Activated CD8-positive, alpha-beta T cell treated with anti-CD3 and anti-CD28 coated beads, Interleukin-2, amount 10 ng/mL, durations not matched to agents 7 days and 5 days (primary cell): ENCODE measurements at regions of chr6 and their contacts with region 1.

Region 1: GRCh38 chr6:26054857-26055669 is 32.2 kb upstream of the HFE start:
- DNase-seq: peak; percentile 95
- ATAC-seq: peak; percentile 72
- H3K4me3 Mint-ChIP-seq: peak overlapping the region; percentile 87
- H3K27ac Mint-ChIP-seq: peak overlapping the region; percentile 100
- H3K4me1 Mint-ChIP-seq: peaks cover 36% of the 10 kb centered on the region
- H3K27me3 Mint-ChIP-seq: no peaks in the 10 kb centered on the region

Region 2: GRCh38 chr6:25971187-25971811 is 83.8 kb before region 1 on chr6:
- CTCF ChIA-PET with region 1: no interaction called
- POLR2A ChIA-PET with region 1: no interaction called
- DNase-seq: no peak
- ATAC-seq: no peak
- H3K4me3 Mint-ChIP-seq: no peak overlapping the region
- H3K27ac Mint-ChIP-seq: no peak overlapping the region
- H3K4me1 Mint-ChIP-seq: peaks cover 46% of the 10 kb centered on the region
- H3K27me3 Mint-ChIP-seq: no peaks in the 10 kb centered on the region

Region 3: DNA sequence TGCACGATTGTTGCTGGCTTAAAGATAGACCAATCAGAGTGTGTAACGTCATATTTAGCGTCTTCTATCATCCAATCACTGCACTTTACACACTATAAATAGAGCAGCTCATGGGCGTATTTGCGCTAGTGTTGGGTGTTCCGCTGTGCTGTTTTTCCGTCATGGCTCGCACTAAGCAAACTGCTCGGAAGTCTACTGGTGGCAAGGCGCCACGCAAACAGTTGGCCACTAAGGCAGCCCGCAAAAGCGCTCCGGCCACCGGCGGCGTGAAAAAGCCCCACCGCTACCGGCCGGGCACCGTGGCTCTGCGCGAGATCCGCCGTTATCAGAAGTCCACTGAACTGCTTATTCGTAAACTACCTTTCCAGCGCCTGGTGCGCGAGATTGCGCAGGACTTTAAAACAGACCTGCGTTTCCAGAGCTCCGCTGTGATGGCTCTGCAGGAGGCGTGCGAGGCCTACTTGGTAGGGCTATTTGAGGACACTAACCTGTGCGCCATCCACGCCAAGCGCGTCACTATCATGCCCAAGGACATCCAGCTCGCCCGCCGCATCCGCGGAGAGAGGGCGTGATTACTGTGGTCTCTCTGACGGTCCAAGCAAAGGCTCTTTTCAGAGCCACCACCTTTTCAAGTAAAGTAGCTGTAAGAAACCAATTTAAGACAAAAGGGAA is 34.6 kb before region 1 on chr6:
- CTCF ChIA-PET with region 1: interaction called, 5 read pairs
- POLR2A ChIA-PET with region 1: interaction called, 1,951 read pairs
- DNase-seq: peak; percentile 88
- ATAC-seq: peak; percentile 51
- H3K4me3 Mint-ChIP-seq: peak overlapping the region; percentile 96
- H3K27ac Mint-ChIP-seq: peak overlapping the region; percentile 100
- H3K4me1 Mint-ChIP-seq: peaks cover 65% of the 10 kb centered on the region
- H3K27me3 Mint-ChIP-seq: no peaks in the 10 kb centered on the region

Region 4: GRCh38 chr6:26065952-26066380 is 10.9 kb after region 1 on chr6:
- CTCF ChIA-PET with region 1: interaction called, 11 read pairs
- POLR2A ChIA-PET with region 1: interaction called, 14 read pairs
- DNase-seq: peak; percentile 76
- ATAC-seq: peak; percentile 91
- H3K4me3 Mint-ChIP-seq: no peak overlapping the region
- H3K27ac Mint-ChIP-seq: no peak overlapping the region
- H3K4me1 Mint-ChIP-seq: peaks cover 15% of the 10 kb centered on the region
- H3K27me3 Mint-ChIP-seq: peaks cover 26% of the 10 kb centered on the region

Region 5: DNA sequence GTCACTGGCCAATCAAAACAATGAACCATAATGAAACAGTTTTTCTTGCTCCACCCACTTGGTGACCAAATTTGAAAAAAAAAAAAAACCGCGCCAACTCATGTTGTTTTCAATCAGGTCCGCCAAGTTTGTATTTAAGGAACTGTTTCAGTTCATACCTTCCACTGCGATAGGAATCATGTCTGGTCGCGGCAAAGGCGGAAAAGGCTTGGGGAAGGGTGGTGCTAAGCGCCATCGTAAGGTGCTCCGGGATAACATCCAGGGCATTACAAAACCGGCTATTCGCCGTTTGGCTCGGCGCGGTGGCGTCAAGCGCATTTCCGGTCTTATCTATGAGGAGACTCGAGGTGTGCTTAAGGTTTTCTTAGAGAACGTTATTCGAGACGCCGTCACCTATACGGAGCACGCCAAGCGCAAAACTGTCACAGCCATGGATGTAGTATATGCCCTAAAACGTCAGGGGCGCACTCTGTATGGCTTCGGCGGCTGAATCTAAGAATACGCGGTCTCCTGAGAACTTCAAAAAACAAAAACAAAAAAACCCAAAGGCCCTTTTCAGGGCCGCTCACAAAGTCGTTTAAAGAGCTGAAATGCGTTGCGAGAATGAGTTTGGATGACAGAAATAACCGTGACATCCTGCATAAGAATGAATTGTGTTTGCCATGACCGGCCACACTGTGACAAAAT is 48.9 kb after region 1 on chr6:
- CTCF ChIA-PET with region 1: interaction called, 741 read pairs
- POLR2A ChIA-PET with region 1: interaction called, 118 read pairs
- DNase-seq: peak; percentile 93
- ATAC-seq: peak; percentile 89
- H3K4me3 Mint-ChIP-seq: peak overlapping the region; percentile 85
- H3K27ac Mint-ChIP-seq: peak overlapping the region; percentile 98
- H3K4me1 Mint-ChIP-seq: peaks cover 26% of the 10 kb centered on the region
- H3K27me3 Mint-ChIP-seq: peaks cover 2% of the 10 kb centered on the region

Region 6: GRCh38 chr6:26196846-26197648 is 142.0 kb after region 1 on chr6:
- CTCF ChIA-PET with region 1: no interaction called
- POLR2A ChIA-PET with region 1: interaction called, 114 read pairs
- DNase-seq: peak; percentile 92
- ATAC-seq: peak; percentile 43
- H3K4me3 Mint-ChIP-seq: peak overlapping the region; percentile 99
- H3K27ac Mint-ChIP-seq: peak overlapping the region; percentile 93
- H3K4me1 Mint-ChIP-seq: peaks cover 50% of the 10 kb centered on the region
- H3K27me3 Mint-ChIP-seq: no peaks in the 10 kb centered on the region

Region 7: DNA sequence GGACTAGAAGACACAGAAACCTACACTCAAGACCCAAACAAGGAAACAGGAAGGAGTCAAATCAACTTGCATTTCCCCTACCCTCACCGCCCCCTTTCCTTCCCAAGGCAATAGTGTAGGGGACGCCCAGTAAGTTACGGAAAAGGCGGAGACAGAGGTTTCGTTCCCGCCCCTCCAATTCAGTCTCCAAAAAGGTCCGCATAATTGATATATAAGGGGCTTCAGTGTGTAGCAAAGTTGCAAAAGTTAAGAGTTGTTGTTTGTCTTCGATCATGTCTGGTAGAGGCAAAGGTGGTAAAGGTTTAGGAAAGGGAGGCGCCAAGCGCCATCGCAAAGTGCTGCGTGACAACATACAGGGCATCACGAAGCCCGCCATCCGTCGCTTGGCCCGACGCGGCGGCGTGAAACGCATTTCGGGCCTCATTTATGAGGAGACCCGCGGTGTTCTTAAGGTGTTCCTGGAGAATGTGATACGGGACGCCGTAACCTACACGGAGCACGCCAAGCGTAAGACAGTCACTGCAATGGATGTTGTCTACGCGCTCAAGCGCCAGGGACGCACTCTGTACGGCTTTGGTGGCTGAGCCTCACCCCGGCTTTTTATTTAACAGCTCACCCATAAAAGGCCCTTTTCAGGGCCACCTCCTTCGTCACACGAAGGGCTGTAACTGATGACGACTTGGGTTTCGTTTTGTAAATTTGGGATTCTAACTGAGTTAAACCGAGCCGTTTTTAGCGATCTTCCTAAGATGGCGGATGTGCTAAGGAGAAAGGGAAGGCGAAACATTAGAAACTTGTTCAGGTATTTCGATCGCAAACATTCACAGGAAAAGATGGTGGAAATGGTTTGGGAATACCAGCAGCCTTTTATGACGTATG is 185.3 kb after region 1 on chr6:
- CTCF ChIA-PET with region 1: no interaction called
- POLR2A ChIA-PET with region 1: interaction called, 62 read pairs
- DNase-seq: peak; percentile 94
- ATAC-seq: peak; percentile 81
- H3K4me3 Mint-ChIP-seq: peak overlapping the region; percentile 74
- H3K27ac Mint-ChIP-seq: peak overlapping the region; percentile 96
- H3K4me1 Mint-ChIP-seq: peaks cover 51% of the 10 kb centered on the region
- H3K27me3 Mint-ChIP-seq: peaks cover 2% of the 10 kb centered on the region